ENCODE measurements at regions of chr19 and their contacts with region 1.

Region 1: DNA sequence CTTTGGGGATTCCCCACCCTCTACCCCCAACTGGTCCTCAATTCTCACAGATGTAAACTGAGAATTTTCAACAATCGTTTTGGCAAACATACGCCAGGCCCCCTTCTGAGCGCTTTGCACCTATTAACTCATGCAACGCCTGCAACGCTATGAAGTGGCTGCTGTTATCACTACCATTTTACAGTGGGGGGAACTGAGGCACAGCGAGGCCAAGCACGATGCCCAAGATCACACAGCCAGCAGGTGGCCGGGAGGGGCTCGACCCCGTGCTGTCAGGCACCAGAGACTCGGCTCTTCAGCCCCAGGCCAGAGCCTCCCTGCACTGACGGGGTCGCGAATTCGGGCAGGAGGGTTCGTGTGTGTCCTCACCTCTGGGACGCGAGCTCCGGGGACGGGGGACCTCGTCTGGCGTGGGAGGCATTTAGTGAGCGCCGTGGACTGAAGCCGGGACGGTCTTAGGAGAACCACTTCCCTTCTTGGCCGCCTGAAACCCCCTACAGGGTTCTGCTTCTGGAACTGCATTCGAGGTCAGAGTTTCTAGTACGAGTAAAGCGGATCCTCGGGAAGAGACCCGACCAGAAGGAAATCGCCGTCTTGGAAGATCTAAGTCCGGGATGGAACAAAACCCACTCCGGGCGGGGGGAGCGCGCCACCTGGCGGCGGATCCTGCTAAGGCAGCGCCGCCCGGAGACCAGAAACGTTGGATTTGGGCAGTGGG is 21.0 kb downstream of the ZNF114 start:
- DNase-seq: peak; percentile 74
- ATAC-seq: peak; percentile 53
- H3K4me3 Mint-ChIP-seq: peak overlapping the region; percentile 64
- H3K27ac Mint-ChIP-seq: no peak overlapping the region
- H3K4me1 Mint-ChIP-seq: peaks cover 3% of the 10 kb centered on the region
- H3K27me3 Mint-ChIP-seq: peaks cover under 1% of the 10 kb centered on the region

Region 2: DNA sequence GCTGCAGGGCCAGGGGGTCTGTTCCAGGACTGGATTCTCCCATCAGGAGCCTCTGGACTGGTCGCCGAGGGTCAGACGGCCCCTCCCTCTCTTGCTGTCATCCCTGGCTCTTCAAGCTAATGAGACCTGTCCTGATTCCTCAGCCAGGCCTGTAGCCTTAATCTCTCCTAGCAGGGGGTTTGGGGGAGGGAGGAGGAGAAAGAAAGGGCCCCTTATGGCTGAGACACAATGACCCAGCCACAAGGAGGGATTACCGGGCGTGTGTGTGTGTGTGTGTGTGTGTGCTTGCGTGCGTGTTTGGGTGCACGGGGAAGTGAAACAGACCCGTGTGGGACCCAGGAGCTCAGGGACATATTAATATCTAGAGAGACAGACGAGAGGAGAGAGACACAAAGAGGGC is 471.1 kb before region 1 on chr19:
- CTCF ChIA-PET with region 1: no interaction called
- POLR2A ChIA-PET with region 1: no interaction called
- intact Hi-C with region 1: no loop called
- DNase-seq: no peak
- ATAC-seq: no peak
- H3K4me3 Mint-ChIP-seq: no peak overlapping the region
- H3K27ac Mint-ChIP-seq: no peak overlapping the region
- H3K4me1 Mint-ChIP-seq: no peaks in the 10 kb centered on the region
- H3K27me3 Mint-ChIP-seq: peaks cover 38% of the 10 kb centered on the region

Region 3: DNA sequence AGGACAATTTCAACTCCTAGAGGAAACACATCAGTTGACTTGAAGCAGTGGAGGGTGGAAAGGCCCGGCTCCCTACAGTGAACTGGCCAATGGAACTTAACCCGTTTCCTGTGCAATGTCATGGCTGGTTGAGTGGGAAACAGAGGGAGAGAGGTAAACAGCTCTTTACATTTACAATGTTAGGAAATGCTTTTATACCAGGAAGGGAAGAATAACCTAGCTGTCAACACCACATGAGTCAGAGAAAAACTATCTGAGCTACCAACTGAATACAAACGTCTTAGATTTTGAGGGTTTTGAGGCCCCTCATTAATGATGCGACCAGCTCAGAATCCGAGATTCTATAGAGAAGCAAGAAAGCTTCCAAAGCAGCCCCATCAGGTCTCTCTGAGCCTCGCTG is 71.9 kb before region 1 on chr19:
- CTCF ChIA-PET with region 1: no interaction called
- POLR2A ChIA-PET with region 1: no interaction called
- intact Hi-C with region 1: no loop called
- DNase-seq: no peak
- ATAC-seq: no peak
- H3K4me3 Mint-ChIP-seq: no peak overlapping the region
- H3K27ac Mint-ChIP-seq: no peak overlapping the region
- H3K4me1 Mint-ChIP-seq: no peaks in the 10 kb centered on the region
- H3K27me3 Mint-ChIP-seq: no peaks in the 10 kb centered on the region

Region 4: DNA sequence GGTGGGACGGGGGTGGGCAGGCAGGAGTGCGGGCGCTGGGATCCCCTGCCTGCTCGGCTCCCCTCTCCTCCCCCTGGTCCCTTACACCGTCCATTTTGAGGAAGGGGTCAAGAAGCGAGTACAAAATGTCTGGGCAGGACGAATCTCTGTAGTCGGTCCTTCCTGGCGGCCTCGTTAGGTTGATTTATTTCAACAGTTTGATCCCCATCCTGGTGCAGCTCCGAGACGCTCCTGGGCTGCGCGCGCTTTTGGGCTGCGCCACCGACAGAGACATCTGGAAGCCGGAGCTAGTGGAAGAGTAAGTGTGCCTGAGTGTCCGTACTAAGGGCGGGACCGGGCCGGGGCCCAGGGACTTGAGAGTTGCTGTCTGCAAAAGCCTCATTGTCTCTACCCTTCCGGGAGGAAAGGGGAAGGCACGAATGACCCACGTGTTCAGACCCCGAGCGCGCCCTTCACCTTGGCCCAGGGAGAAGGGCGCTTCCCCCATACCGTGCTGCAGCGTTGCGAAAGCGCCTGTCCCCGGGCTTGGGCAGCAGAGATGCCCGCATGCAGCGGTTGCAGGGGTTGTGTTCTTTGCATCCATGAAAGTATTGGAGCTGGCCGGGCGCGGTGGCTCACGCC is 19.3 kb before region 1 on chr19:
- CTCF ChIA-PET with region 1: interaction called, 11 read pairs
- POLR2A ChIA-PET with region 1: no interaction called
- intact Hi-C with region 1: loop called (anchors 1 to 2 kb)
- DNase-seq: peak; percentile 24
- ATAC-seq: peak; percentile 34
- H3K4me3 Mint-ChIP-seq: peak overlapping the region; percentile 75
- H3K27ac Mint-ChIP-seq: no peak overlapping the region
- H3K4me1 Mint-ChIP-seq: peaks cover 12% of the 10 kb centered on the region
- H3K27me3 Mint-ChIP-seq: peaks cover 20% of the 10 kb centered on the region

Region 5: DNA sequence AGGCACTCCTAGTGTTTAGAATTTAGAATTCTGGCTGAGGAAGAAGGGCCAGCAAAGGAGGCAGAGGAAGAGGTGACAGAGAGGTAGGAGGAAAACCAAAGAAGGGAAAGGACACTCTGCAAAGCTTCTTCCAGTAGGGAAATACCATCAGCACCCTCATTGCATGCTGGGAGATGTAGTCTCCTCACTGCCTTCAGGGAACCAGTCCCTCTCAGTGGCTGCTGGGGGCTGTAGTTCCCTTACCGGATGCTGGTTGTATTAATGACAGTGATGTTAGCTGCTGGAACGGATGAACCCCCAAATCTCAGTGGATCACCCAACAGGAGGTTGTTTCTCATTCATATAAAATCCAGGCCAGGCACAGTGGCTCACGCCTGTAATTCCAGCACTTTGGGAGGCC is 112.7 kb after region 1 on chr19:
- CTCF ChIA-PET with region 1: no interaction called
- POLR2A ChIA-PET with region 1: no interaction called
- intact Hi-C with region 1: no loop called
- DNase-seq: peak; percentile 66
- ATAC-seq: peak; percentile 70
- H3K4me3 Mint-ChIP-seq: no peak overlapping the region
- H3K27ac Mint-ChIP-seq: no peak overlapping the region
- H3K4me1 Mint-ChIP-seq: peaks cover 10% of the 10 kb centered on the region
- H3K27me3 Mint-ChIP-seq: peaks cover 4% of the 10 kb centered on the region